Left cardiac atrium (tissue), 4 donors: ENCODE measurements at regions of chr12 and their contacts with region 1.

Region 1: GRCh38 chr12:32918890-32919801 is 22.6 kb upstream of the PKP2 start:
- DNase-seq: no peak
- ATAC-seq: peak; percentile 64 to 65

Region 2: GRCh38 chr12:32755654-32756475 is 163.3 kb before region 1 on chr12 and contains the start of gene YARS2:
- intact Hi-C with region 1: loop called (anchors 2 to 10 kb)
- DNase-seq: peak; percentile 97
- ATAC-seq: peak; percentile 99 to 100
- total RNA-seq, gene YARS2: 10.2 to 10.3 TPM

Region 3: DNA sequence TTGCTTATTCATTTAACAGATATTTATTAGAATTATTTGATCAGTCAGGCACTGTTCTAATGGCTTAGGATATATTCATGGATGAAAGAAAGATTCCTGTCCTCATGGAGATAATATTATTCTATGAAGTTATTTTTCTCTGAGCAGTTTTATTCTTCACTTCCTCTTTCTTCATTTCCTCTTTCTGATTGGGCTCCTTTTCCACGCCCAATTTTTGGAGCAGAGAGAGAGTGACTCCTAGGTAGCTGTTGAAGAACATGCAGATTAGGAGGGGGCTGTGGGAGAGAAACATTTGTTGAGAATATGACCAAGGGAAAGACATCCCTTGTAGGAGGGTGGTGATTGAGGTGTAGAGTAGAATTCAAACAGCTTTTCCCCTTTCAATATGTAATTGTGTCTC is 157.4 kb before region 1 on chr12:
- intact Hi-C with region 1: loop called (anchors 2 to 10 kb)
- DNase-seq: no peak
- ATAC-seq: no peak

Region 4: DNA sequence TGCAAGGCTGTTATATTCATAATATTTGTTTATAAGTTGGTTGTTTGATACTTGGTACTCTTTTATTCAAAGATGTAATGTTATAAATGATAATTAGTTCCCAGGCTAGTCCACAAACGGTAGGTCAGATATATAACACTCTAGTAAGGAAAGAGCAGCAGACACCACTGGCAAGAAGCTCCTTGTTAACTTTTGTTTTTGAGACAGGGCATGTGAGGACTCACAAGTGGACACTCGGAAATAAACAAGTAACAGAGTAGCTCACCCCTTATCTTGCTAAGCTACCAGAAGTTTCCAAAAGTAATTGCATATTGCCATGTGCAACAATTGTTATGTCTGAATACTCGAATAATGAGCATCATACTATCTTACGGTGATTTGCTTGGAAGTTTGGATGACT is 124.9 kb before region 1 on chr12:
- intact Hi-C with region 1: loop called in 1 of 2 experiments (anchors 10 kb)
- DNase-seq: no peak
- ATAC-seq: peak in 1 of 2 donors; percentile 15

Region 5: GRCh38 chr12:32836710-32837109 is 82.4 kb before region 1 on chr12:
- intact Hi-C with region 1: no loop called
- DNase-seq: no peak
- ATAC-seq: no peak